Mammary epithelial cell (primary cell): ENCODE measurements at regions of chr6 and their contacts with region 1.

Region 1: DNA sequence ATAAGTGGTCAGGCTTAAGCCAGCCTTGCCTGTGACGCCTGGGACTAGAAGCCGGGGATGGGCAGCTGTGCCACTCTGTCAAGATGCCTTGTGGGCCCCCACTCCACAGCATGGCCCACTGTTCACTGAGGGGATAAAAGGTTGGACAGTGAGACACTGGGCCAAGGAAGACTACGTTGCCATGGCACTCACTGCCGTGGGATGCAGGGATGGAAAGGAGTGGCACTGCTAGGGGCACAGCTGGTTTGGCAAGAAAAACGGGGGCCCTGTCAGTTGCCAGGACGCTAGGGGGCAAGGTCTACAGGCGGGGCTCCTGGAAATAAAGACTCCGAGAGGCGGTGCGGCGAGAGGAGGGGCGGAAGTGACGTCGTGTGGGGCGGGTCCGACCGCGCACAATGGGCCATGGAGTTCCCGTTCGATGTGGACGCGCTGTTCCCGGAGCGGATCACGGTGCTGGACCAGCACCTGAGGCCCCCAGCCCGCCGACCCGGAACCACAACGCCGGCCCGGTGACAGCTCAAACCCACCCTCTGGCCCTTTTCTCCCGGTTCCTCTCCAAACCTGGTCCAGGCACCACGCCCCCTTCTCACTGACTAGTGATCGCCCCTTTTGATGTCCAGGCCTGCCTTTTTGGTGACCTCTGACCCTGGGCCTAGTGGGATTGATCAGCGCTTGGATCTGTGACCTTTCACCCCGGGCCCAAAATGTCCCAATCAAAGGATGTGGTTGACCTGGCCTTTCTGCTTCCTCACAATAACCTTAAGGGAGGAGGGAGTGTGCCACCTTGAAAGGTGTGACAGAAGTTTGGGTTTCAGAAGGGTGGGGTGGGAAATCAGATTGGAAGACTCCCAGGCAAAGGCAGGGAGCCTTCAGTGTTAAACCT is at the start of gene ATAT1:
- DNase-seq: peak; percentile 68
- H3K4me3 ChIP-seq: peak within 1 kb of the TSS; percentile 52 to 77 (median 65)
- H3K27ac ChIP-seq: peak within 1 kb of the TSS; percentile 71
- H3K4me1 ChIP-seq: peaks cover 10% of the 10 kb centered on the region
- H3K27me3 ChIP-seq: no peaks in the 10 kb centered on the region
- CTCF ChIP-seq: peak; percentile 13 to 47
- total RNA-seq, gene ATAT1: 5.2 to 6.9 TPM

Region 2: DNA sequence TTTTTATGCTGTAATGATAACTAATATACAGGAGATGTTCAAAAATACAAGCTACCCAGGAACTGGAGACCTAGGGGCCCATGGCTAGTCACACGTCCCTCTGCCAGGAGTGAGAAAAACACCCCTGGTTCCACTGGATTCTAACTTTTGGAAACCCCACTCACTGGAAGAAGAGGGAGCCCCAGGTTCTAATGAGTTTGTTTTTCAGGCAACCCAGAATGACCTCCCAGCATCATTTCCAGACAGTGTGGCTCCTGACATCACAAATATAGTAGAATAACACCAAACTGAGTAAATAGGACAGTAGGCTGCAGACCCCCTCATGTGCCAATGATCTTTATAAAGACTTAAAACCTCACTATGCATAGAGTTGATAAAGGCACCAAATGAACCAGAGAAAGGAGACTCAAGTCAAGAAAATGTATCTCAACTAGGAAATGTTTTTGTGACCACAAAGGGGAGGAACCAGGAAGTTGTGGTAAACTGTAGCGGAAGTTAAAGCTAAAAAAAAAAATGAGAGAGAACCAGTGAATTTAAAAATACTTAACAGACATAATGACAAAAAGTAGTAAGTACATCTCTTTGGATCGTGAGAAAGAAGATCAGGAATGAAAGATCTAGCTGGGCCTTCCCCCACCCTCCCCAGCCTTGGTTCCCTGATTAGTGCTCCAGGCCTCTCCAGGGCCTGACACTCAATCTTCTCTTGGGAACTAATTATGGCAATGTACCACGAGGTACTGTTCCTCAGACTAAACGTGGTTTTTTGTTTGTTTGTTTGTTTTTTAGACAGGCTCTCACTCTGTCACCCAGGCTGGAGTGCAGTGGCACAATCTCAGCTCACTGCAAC is 117.6 kb before region 1 on chr6:
- CTCF ChIA-PET with region 1: no interaction called
- dilution Hi-C with region 1: no loop called
- in situ Hi-C with region 1: no loop called
- intact Hi-C with region 1: no loop called
- DNase-seq: no peak
- H3K4me3 ChIP-seq: no peak overlapping the region
- H3K27ac ChIP-seq: no peak overlapping the region
- H3K4me1 ChIP-seq: peaks cover 7% of the 10 kb centered on the region
- H3K27me3 ChIP-seq: no peaks in the 10 kb centered on the region
- CTCF ChIP-seq: no peak

Region 3: GRCh38 chr6:30646458-30647241 is 19.9 kb after region 1 on chr6 and contains the start of gene C6orf136:
- CTCF ChIA-PET with region 1: no interaction called
- dilution Hi-C with region 1: no loop called
- in situ Hi-C with region 1: no loop called
- intact Hi-C with region 1: loop called (anchors 2 kb)
- DNase-seq: peak; percentile 83
- H3K4me3 ChIP-seq: peak within 1 kb of the TSS; percentile 81 to 100 (median 97)
- H3K27ac ChIP-seq: peak within 1 kb of the TSS; percentile 69
- H3K4me1 ChIP-seq: peaks cover 14% of the 10 kb centered on the region
- H3K27me3 ChIP-seq: no peaks in the 10 kb centered on the region
- CTCF ChIP-seq: no peak
- total RNA-seq, gene C6orf136: 1.8 to 11.2 TPM